Gastrocnemius medialis (tissue), 4 donors: ENCODE measurements at regions of chr19 and their contacts with region 1.

Region 1: GRCh38 chr19:49148784-49149651 is 6.2 kb downstream of the HRC start:
- DNase-seq: peak; percentile 96 to 98
- ATAC-seq: peak; percentile 68 to 70
- H3K4me3 ChIP-seq: peak overlapping the region; percentile 64 to 87 (median 83)
- H3K27ac ChIP-seq: peak overlapping the region; percentile 99 to 100 (median 99)
- H3K4me1 ChIP-seq: peaks cover 29 to 60% of the 10 kb centered on the region in 2 donors
- H3K27me3 ChIP-seq: no peaks in the 10 kb centered on the region
- CTCF ChIP-seq: no peak
- POLR2A ChIP-seq: peak; percentile 64 to 79

Region 2: DNA sequence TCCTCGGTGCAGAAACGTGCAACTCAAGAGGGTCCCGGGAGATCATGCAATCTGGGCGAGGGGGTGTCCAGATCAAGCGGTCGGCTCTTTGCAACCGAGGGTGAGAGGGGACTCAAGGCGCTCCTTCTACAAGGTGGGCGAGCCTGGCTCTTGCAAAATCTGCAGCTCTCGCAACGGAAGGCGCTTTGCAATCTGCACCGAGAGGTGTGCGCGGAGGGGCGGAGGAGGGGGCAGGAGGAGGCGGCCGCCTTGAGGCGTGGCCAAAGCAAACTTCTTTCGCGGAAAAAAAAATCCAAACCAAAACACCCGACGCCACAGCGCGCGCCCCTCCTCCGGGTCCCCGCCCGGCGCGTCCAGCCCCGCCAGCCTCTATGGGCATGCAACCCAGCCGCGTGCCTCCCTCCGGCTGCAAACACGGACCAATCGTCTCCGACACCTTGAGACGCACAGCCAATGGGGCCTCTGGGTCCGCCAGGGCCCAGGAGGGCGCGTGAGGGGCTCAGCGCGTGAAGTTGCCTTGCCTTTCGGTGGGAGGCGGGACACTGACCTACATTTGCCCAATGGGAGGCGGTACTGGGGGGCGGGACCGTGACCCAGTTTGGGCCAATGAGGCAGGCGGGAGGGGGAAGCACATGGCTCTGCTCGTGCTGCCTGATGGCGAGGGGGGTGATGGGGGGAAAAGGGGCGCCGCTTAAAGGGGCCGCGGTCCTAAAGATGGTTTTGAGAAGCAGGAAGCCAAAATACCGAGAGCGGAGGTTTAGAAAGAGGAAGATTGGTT is 511.7 kb before region 1 on chr19 and contains the start of gene DBP:
- in situ Hi-C with region 1: no loop called
- intact Hi-C with region 1: loop called (anchors 5 kb)
- DNase-seq: peak; percentile 99 to 100
- ATAC-seq: peak; percentile 52 to 55
- H3K4me3 ChIP-seq: peak within 1 kb of the TSS; percentile 58 to 95 (median 76)
- H3K27ac ChIP-seq: peak within 1 kb of the TSS; percentile 97 to 100 (median 100)
- H3K4me1 ChIP-seq: peaks cover 37 to 46% of the 10 kb centered on the region in 2 donors
- H3K27me3 ChIP-seq: no peaks in the 10 kb centered on the region
- CTCF ChIP-seq: peak in 1 of 5 experiments; percentile 21
- POLR2A ChIP-seq: peak; percentile 59 to 76
- total RNA-seq, gene DBP: 1.7 to 12.9 (median 4.4) TPM

Region 3: GRCh38 chr19:48999481-49000325 is 149.3 kb before region 1 on chr19:
- in situ Hi-C with region 1: no loop called
- intact Hi-C with region 1: no loop called
- DNase-seq: no peak
- ATAC-seq: peak in 1 of 2 donors; percentile 67
- H3K4me3 ChIP-seq: no peak overlapping the region
- H3K27ac ChIP-seq: peak overlapping the region in 1 of 4 donors; percentile 72
- H3K4me1 ChIP-seq: peaks cover 5 to 11% of the 10 kb centered on the region in 2 donors
- H3K27me3 ChIP-seq: no peaks in the 10 kb centered on the region
- CTCF ChIP-seq: peak in 4 of 5 experiments; percentile 44 to 65 (median 56)
- POLR2A ChIP-seq: no peak

Region 4: GRCh38 chr19:49097455-49098288 is 51.3 kb before region 1 on chr19:
- in situ Hi-C with region 1: loop called in 2 of 4 experiments (anchors 5 kb)
- intact Hi-C with region 1: loop called (anchors 1 kb)
- DNase-seq: peak; percentile 50 to 80
- ATAC-seq: peak; percentile 62 to 77
- H3K4me3 ChIP-seq: no peak overlapping the region
- H3K27ac ChIP-seq: peak overlapping the region; percentile 75 to 85 (median 78)
- H3K4me1 ChIP-seq: peaks cover 46 to 50% of the 10 kb centered on the region in 2 donors
- H3K27me3 ChIP-seq: no peaks in the 10 kb centered on the region
- CTCF ChIP-seq: peak; percentile 97 to 99 (median 99)
- POLR2A ChIP-seq: no peak

Region 5: DNA sequence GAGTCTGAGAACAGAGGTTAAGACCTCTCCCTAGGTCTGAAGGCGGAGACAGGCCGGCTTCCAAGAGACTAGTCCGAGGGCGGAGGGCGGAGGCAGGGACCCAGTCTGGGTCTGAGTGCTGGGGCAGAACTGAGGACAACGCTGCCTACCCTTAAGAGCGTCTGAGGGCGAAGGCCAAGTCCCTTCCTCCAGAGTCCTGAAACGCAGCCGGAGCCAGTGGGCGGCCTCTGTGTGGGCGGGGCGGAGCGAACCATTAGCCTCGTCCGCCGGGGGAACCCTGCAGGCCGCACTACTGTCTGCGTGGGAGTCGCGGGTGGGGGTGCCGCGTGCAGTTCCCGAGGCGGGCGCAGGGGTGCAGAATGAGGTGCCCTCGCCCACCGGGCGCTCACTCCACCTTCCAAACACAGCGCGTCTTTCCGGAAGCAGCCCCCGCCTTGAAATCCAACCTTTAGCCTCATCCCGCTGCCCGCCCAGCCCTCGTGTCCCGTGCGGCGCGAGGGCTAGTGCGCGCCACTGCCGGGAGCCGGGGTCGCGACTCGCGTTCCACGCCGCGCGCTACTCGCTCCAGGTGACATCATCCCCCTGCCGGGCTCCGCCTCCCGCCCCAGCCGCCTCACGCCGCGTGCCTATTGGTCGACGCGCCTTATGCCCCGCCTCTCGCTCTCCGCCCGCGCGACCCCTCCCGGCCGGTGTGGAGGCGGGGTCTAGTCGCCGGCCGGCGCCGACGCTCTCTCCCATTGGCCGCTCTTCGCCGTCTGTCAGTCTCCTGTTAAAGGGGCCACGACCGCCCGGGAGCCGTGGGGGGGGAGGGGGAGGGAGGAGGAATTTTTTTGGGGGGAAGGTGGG is 30.2 kb before region 1 on chr19 and contains the start of gene C19orf73:
- in situ Hi-C with region 1: no loop called
- intact Hi-C with region 1: loop called (anchors 2 kb)
- DNase-seq: peak; percentile 89 to 93
- ATAC-seq: peak; percentile 81 to 91
- H3K4me3 ChIP-seq: peak within 1 kb of the TSS; percentile 70 to 87 (median 79)
- H3K27ac ChIP-seq: peak within 1 kb of the TSS; percentile 94 to 99 (median 98)
- H3K4me1 ChIP-seq: peaks cover 18 to 27% of the 10 kb centered on the region in 2 donors
- H3K27me3 ChIP-seq: no peaks in the 10 kb centered on the region
- CTCF ChIP-seq: peak in 2 of 5 experiments; percentile 32 to 37
- POLR2A ChIP-seq: peak; percentile 65 to 74
- total RNA-seq, gene C19orf73: 1.3 to 11.7 (median 3.5) TPM